Activated CD8-positive, alpha-beta T cell treated with anti-CD3 and anti-CD28 coated beads, Interleukin-2, amount 10 ng/mL, durations not matched to agents 7 days and 5 days (primary cell): ENCODE measurements at regions of chr11 and their contacts with region 1.

Region 1: GRCh38 chr11:72683782-72684200 is 9.6 kb upstream of the PDE2A start:
- DNase-seq: peak; percentile 78
- ATAC-seq: peak; percentile 64
- H3K4me3 Mint-ChIP-seq: no peak overlapping the region
- H3K27ac Mint-ChIP-seq: no peak overlapping the region
- H3K4me1 Mint-ChIP-seq: peaks cover 44% of the 10 kb centered on the region
- H3K27me3 Mint-ChIP-seq: peaks cover 8% of the 10 kb centered on the region

Region 2: DNA sequence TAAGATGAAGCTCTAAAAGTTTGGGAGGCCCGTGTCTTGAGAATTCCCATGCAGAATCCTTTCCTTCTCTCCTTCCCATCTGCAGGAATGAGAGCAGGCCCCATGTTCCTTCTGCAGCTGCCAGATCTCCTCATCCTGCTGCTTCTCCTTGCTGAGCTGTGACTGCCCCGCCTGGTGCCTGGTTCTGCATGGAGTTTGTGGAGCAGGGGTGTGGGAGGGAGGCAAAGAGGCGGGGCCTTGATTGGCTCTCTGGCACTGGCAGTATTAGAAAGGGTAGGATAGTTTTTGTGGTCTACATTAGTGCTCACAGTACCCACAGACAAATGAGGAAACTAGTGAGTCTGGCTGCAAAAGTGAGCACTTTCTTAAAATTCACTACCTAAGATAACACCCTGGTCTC is 158.3 kb before region 1 on chr11:
- CTCF ChIA-PET with region 1: no interaction called
- POLR2A ChIA-PET with region 1: no interaction called
- DNase-seq: no peak
- ATAC-seq: no peak
- H3K4me3 Mint-ChIP-seq: no peak overlapping the region
- H3K27ac Mint-ChIP-seq: no peak overlapping the region
- H3K4me1 Mint-ChIP-seq: peaks cover 15% of the 10 kb centered on the region
- H3K27me3 Mint-ChIP-seq: peaks cover 8% of the 10 kb centered on the region

Region 3: DNA sequence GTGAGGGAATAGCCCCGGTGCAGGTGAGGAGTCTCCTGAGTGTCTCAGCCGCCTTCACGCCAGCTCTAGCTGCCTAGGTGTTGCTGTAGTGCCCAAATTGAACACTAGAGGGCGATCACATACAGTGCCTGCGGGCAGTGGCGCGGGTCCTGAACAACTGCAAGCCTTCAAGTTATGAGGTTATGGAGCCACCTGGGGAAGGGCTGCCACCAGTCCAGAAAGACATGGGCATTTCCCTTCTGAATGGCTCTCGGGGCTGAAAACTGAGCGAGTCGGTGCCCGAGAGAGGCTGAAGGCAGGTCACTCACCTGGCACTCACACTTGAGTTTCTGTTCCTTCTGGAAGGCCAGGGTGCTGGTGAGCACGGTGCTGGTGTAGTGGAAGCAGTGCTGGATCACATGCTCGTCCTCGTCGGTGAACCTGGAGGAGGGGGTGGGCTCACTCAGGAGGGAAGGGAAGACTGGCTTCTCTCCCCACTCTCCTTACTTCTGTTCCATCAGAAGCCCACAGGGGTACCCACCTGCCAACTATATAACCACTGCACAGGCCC is 98.0 kb before region 1 on chr11:
- CTCF ChIA-PET with region 1: interaction called, 132 read pairs
- POLR2A ChIA-PET with region 1: no interaction called
- DNase-seq: peak; percentile 77
- ATAC-seq: peak; percentile 73
- H3K4me3 Mint-ChIP-seq: no peak overlapping the region
- H3K27ac Mint-ChIP-seq: no peak overlapping the region
- H3K4me1 Mint-ChIP-seq: peaks cover 30% of the 10 kb centered on the region
- H3K27me3 Mint-ChIP-seq: peaks cover 49% of the 10 kb centered on the region

Region 4: DNA sequence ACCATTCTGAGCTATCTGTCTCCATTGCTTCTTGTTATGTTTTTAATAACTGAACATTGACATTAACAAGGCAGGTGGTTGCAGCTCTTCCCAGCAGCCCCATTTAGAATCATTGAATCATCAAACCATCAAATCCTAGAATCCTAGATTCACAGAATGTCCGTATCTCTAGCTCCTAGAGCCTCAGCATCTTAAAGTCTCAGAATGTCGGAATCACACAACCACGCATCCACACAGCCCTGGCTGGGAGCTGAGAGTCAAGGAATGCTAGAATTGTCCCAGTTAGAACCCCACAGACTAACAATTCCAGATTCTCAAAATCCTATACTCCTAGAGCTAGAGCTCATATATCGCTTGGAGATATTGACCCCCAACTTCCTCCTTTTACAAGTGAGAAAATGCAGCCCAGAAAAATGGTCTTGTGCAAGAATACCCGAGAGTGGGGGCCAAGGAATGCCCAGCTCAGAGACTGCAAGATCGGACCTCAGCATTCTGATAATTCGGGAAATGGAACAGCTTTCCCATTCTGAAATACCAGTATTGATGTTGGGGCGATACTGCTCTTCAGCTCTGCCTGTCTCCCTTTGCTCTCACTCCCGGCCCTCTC is 48.4 kb before region 1 on chr11:
- CTCF ChIA-PET with region 1: interaction called, 14 read pairs
- POLR2A ChIA-PET with region 1: no interaction called
- DNase-seq: no peak
- ATAC-seq: no peak
- H3K4me3 Mint-ChIP-seq: no peak overlapping the region
- H3K27ac Mint-ChIP-seq: no peak overlapping the region
- H3K4me1 Mint-ChIP-seq: peaks cover 2% of the 10 kb centered on the region
- H3K27me3 Mint-ChIP-seq: peaks cover 7% of the 10 kb centered on the region

Region 5: GRCh38 chr11:72668611-72669347 is 15.0 kb before region 1 on chr11:
- CTCF ChIA-PET with region 1: interaction called, 39 read pairs
- POLR2A ChIA-PET with region 1: interaction called, 7 read pairs
- DNase-seq: peak; percentile 83
- ATAC-seq: peak; percentile 92
- H3K4me3 Mint-ChIP-seq: no peak overlapping the region
- H3K27ac Mint-ChIP-seq: peak overlapping the region; percentile 58
- H3K4me1 Mint-ChIP-seq: peaks cover 17% of the 10 kb centered on the region
- H3K27me3 Mint-ChIP-seq: peaks cover 42% of the 10 kb centered on the region

Region 6: GRCh38 chr11:72696866-72697700 is 13.3 kb after region 1 on chr11:
- CTCF ChIA-PET with region 1: interaction called, 13 read pairs
- POLR2A ChIA-PET with region 1: no interaction called
- DNase-seq: no peak
- ATAC-seq: no peak
- H3K4me3 Mint-ChIP-seq: no peak overlapping the region
- H3K27ac Mint-ChIP-seq: no peak overlapping the region
- H3K4me1 Mint-ChIP-seq: no peaks in the 10 kb centered on the region
- H3K27me3 Mint-ChIP-seq: no peaks in the 10 kb centered on the region

Region 7: GRCh38 chr11:72908032-72908676 is 224.4 kb after region 1 on chr11:
- CTCF ChIA-PET with region 1: no interaction called
- POLR2A ChIA-PET with region 1: no interaction called
- DNase-seq: no peak
- ATAC-seq: no peak
- H3K4me3 Mint-ChIP-seq: no peak overlapping the region
- H3K27ac Mint-ChIP-seq: no peak overlapping the region
- H3K4me1 Mint-ChIP-seq: no peaks in the 10 kb centered on the region
- H3K27me3 Mint-ChIP-seq: no peaks in the 10 kb centered on the region